ENCODE measurements at regions of chr5 and their contacts with region 1.

Region 1: DNA sequence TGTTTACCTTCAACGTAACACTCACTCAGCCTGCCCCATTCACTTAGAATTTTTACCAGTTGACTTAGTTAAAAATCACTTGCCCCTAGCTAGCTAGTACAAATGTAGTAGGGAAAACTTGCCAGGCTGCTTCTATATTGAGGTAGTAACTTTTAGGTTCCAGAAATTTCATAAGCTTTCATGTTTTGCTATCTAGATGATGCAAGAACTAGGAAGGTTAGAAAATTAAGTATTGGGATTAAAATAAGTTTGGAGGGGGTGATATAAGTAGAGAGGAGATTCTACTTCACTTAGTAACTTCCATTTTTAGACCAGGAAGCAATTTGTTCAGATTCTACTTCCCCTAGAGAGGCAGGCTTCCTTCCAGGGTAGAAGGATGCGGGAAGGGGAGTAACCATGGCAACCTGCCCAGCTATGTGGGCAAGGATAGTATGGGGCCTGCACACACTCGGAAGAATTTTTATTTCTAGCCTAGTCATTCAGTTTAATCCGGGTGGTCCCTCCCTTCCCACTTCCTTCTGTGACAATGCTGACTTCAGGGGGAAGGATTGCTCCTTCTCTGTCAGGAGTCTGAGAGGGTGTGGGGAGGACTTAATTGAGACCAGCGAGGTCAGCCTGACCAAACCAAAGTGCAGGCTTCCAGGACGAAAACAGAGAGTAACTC is 4.2 kb downstream of the DAB2 start:
- DNase-seq: no peak
- ATAC-seq: no peak
- H3K4me3 ChIP-seq: no peak overlapping the region
- H3K4me3 Mint-ChIP-seq: no peak overlapping the region
- H3K27ac ChIP-seq: no peak overlapping the region
- H3K27ac Mint-ChIP-seq: no peak overlapping the region
- H3K4me1 ChIP-seq: peaks cover 0 to 13% of the 10 kb centered on the region in 2 experiments
- H3K4me1 Mint-ChIP-seq: peaks cover 7 to 10% (median 8%) of the 10 kb centered on the region in 3 donors
- H3K27me3 ChIP-seq: peaks cover 0 to 13% of the 10 kb centered on the region in 2 experiments
- H3K27me3 Mint-ChIP-seq: peaks cover 10 to 19% of the 10 kb centered on the region in 2 donors

Region 2: DNA sequence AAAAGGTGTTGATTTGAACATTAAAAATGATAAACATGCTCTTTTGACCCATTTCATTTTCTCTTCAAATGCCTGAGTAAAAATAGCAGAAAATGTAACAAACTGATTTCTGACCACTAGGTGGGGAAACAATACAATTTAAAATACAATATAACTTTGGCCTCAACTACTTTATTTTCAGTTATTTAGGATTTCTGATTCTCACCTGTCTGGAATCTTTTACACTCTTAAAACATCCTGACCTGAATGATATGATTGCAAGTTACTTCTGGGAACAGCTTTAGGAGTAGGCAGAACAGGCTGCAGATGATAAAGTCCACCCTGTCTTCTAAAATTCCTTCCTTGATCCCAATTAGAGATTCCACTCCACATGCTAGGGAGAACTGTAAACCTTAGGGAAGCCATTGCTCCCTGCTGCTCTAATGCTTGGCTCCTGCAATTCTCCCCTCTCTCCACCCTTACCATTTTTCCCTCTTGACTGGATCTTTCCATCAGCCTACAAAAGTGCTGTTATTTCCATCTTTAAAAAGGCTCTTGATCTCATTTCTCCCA is 271.6 kb before region 1 on chr5:
- CTCF ChIA-PET with region 1: no interaction called
- POLR2A ChIA-PET with region 1: interaction called in 1 of 2 experiments, 10 read pairs
- DNase-seq: peak in 1 of 35 experiments; percentile 73
- ATAC-seq: peak; percentile 22 to 66 (median 47)
- H3K4me3 ChIP-seq: no peak overlapping the region
- H3K4me3 Mint-ChIP-seq: peak overlapping the region in 1 of 3 donors; percentile 51
- H3K27ac ChIP-seq: peak overlapping the region; percentile 49
- H3K27ac Mint-ChIP-seq: peak overlapping the region; percentile 90 to 94
- H3K4me1 ChIP-seq: peaks cover 46% of the 10 kb centered on the region in 2 experiments
- H3K4me1 Mint-ChIP-seq: peaks cover 78 to 84% (median 79%) of the 10 kb centered on the region in 3 donors
- H3K27me3 ChIP-seq: no peaks in the 10 kb centered on the region
- H3K27me3 Mint-ChIP-seq: no peaks in the 10 kb centered on the region

Region 3: GRCh38 chr5:39437469-39437868 is 16.9 kb after region 1 on chr5:
- CTCF ChIA-PET with region 1: no interaction called
- POLR2A ChIA-PET with region 1: no interaction called
- DNase-seq: peak in 1 of 35 experiments; percentile 9
- ATAC-seq: no peak
- H3K4me3 ChIP-seq: no peak overlapping the region
- H3K4me3 Mint-ChIP-seq: no peak overlapping the region
- H3K27ac ChIP-seq: no peak overlapping the region
- H3K27ac Mint-ChIP-seq: no peak overlapping the region
- H3K4me1 ChIP-seq: no peaks in the 10 kb centered on the region
- H3K4me1 Mint-ChIP-seq: peaks cover 0 to 3% (median 0%) of the 10 kb centered on the region in 3 donors
- H3K27me3 ChIP-seq: peaks cover 0 to 2% of the 10 kb centered on the region in 2 experiments
- H3K27me3 Mint-ChIP-seq: peaks cover 1 to 14% of the 10 kb centered on the region in 2 donors

Region 4: DNA sequence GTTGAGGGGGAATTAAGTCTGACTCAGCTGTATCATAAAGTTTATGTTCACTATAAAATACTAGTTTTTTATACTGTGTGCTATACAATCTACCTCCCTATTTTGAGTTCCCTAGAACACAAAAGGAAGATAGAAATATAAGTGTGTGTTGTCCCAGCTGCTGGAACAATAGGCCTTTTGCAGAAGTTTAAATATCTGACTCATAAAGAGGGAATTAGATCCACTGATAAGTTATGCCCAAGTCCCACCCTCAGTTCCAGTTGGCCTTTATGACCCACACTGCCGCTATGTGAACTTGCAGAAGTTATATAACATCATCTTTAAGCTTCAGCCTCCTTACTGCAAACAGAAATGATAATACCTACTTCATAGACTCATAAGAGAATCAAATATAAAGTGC is 92.6 kb after region 1 on chr5:
- CTCF ChIA-PET with region 1: no interaction called
- POLR2A ChIA-PET with region 1: no interaction called
- DNase-seq: no peak
- ATAC-seq: no peak
- H3K4me3 ChIP-seq: no peak overlapping the region
- H3K4me3 Mint-ChIP-seq: no peak overlapping the region
- H3K27ac ChIP-seq: no peak overlapping the region
- H3K27ac Mint-ChIP-seq: no peak overlapping the region
- H3K4me1 ChIP-seq: no peaks in the 10 kb centered on the region
- H3K4me1 Mint-ChIP-seq: no peaks in the 10 kb centered on the region
- H3K27me3 ChIP-seq: no peaks in the 10 kb centered on the region
- H3K27me3 Mint-ChIP-seq: peaks cover 2 to 18% of the 10 kb centered on the region in 2 donors